ENCODE measurements at regions of chr1 and their contacts with region 1.

Region 1: DNA sequence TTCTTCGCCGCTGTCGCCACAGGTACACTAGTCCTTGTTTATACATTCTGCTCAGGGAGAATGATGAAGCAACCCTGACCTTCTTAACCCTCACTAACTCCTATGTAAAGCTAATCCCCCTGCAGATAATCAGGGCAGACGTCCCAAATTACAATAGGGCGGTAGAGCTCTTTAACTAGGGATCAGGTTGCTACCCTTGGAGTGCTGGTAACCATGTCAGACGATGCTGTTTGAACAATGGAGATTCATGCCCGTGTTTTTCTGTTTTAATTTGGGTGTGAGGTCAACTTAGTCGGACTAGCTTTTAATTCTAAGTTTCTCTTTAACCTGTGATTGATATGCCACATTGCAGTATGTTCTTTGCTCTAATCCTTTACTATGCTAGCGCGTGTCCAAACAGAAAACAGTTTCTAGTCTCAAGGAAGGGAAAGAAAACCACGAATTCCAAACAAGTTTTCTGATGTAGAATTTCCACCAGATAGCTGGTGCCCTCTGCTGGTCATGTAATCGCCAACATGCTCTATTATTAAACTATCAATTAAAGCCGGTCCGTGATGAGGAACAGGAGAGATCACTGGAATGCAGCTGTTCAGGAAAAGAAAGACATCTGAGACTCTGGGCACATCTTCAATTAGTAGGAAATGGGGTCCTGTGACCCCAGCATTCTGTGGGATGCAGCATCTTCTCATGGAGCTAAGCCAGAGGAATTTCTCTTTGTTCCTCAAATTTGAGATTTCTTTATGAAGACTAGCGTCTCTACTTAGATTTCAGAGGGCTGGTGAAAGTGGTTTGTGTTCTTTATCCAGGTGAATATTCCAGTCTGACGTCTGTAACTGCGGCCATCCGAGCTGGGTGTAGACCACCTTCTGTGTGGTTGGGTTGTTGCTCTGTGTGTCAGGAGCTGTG is 18.3 kb upstream of the VAMP3 start:
- DNase-seq: peak; percentile 59
- ATAC-seq: no peak
- H3K4me3 Mint-ChIP-seq: peak overlapping the region; percentile 23
- H3K27ac Mint-ChIP-seq: no peak overlapping the region
- H3K4me1 Mint-ChIP-seq: peaks cover 30% of the 10 kb centered on the region
- H3K27me3 Mint-ChIP-seq: peaks cover 4% of the 10 kb centered on the region

Region 2: GRCh38 chr1:7667625-7668218 is 85.0 kb before region 1 on chr1:
- CTCF ChIA-PET with region 1: interaction called, 515 read pairs
- POLR2A ChIA-PET with region 1: interaction called, 3 read pairs
- DNase-seq: peak; percentile 84
- ATAC-seq: peak; percentile 81
- H3K4me3 Mint-ChIP-seq: no peak overlapping the region
- H3K27ac Mint-ChIP-seq: no peak overlapping the region
- H3K4me1 Mint-ChIP-seq: peaks cover 3% of the 10 kb centered on the region
- H3K27me3 Mint-ChIP-seq: no peaks in the 10 kb centered on the region

Region 3: GRCh38 chr1:7698641-7699040 is 54.1 kb before region 1 on chr1:
- CTCF ChIA-PET with region 1: interaction called, 15 read pairs
- POLR2A ChIA-PET with region 1: no interaction called
- DNase-seq: no peak
- ATAC-seq: no peak
- H3K4me3 Mint-ChIP-seq: no peak overlapping the region
- H3K27ac Mint-ChIP-seq: no peak overlapping the region
- H3K4me1 Mint-ChIP-seq: peaks cover 11% of the 10 kb centered on the region
- H3K27me3 Mint-ChIP-seq: peaks cover 31% of the 10 kb centered on the region

Region 4: DNA sequence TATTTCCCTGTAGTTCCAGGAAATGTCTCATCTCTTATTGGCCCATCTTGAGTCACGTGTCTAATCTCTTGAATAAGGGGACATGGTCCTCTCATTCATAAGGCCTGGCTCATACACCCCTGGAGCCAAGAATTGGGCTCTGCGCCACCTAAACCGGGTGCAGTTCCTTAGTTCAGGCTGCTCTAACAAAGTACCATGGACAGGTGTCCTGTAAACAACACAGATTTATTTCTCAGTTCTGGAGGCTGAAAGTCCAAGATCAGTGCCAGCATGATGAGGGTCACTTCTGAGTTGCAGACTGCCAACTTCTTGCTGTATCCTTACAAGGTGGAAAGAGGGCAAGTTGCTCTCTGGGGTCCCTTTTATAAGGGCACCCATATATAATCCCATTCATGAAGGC is 41.9 kb before region 1 on chr1:
- CTCF ChIA-PET with region 1: interaction called, 21 read pairs
- POLR2A ChIA-PET with region 1: no interaction called
- DNase-seq: no peak
- ATAC-seq: no peak
- H3K4me3 Mint-ChIP-seq: no peak overlapping the region
- H3K27ac Mint-ChIP-seq: no peak overlapping the region
- H3K4me1 Mint-ChIP-seq: peaks cover 3% of the 10 kb centered on the region
- H3K27me3 Mint-ChIP-seq: peaks cover 44% of the 10 kb centered on the region

Region 5: GRCh38 chr1:7738044-7738443 is 14.7 kb before region 1 on chr1:
- CTCF ChIA-PET with region 1: interaction called, 32 read pairs
- POLR2A ChIA-PET with region 1: interaction called, 3 read pairs
- DNase-seq: no peak
- ATAC-seq: no peak
- H3K4me3 Mint-ChIP-seq: no peak overlapping the region
- H3K27ac Mint-ChIP-seq: no peak overlapping the region
- H3K4me1 Mint-ChIP-seq: peaks cover 3% of the 10 kb centered on the region
- H3K27me3 Mint-ChIP-seq: no peaks in the 10 kb centered on the region

Region 6: DNA sequence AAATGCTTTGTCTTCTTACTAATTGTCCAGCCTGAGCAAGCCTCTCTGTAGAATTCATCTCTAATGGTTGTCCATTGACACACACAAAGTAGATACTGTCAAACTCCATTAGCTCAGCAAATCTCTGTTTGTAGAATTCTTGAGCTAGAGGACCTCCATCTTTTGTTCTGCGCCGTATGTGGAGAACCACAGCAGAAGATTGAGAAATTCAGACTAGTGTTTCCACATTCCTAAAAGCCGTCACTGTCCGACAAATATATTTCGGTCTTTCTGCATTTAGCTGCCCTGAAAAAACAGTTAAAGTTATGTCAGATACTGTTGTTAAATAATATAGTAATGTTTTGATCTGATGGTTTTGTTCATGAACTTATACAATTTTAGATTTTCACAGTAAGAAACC is 21.1 kb after region 1 on chr1:
- CTCF ChIA-PET with region 1: interaction called, 115 read pairs
- POLR2A ChIA-PET with region 1: no interaction called
- DNase-seq: no peak
- ATAC-seq: no peak
- H3K4me3 Mint-ChIP-seq: no peak overlapping the region
- H3K27ac Mint-ChIP-seq: no peak overlapping the region
- H3K4me1 Mint-ChIP-seq: peaks cover 29% of the 10 kb centered on the region
- H3K27me3 Mint-ChIP-seq: peaks cover 10% of the 10 kb centered on the region

Region 7: GRCh38 chr1:7902478-7903085 is 149.8 kb after region 1 on chr1:
- CTCF ChIA-PET with region 1: interaction called, 12 read pairs
- POLR2A ChIA-PET with region 1: no interaction called
- DNase-seq: peak; percentile 74
- ATAC-seq: peak; percentile 87
- H3K4me3 Mint-ChIP-seq: peak overlapping the region; percentile 50
- H3K27ac Mint-ChIP-seq: no peak overlapping the region
- H3K4me1 Mint-ChIP-seq: peaks cover 17% of the 10 kb centered on the region
- H3K27me3 Mint-ChIP-seq: no peaks in the 10 kb centered on the region

Measured in activated CD8-positive, alpha-beta T cell treated with anti-CD3 and anti-CD28 coated beads, Interleukin-2, amount 10 ng/mL, durations not matched to agents 7 days and 5 days (primary cell).